Right ventricle myocardium superior (tissue), 1 donor: ENCODE measurements at regions of chr4 and their contacts with region 1.

Region 1: DNA sequence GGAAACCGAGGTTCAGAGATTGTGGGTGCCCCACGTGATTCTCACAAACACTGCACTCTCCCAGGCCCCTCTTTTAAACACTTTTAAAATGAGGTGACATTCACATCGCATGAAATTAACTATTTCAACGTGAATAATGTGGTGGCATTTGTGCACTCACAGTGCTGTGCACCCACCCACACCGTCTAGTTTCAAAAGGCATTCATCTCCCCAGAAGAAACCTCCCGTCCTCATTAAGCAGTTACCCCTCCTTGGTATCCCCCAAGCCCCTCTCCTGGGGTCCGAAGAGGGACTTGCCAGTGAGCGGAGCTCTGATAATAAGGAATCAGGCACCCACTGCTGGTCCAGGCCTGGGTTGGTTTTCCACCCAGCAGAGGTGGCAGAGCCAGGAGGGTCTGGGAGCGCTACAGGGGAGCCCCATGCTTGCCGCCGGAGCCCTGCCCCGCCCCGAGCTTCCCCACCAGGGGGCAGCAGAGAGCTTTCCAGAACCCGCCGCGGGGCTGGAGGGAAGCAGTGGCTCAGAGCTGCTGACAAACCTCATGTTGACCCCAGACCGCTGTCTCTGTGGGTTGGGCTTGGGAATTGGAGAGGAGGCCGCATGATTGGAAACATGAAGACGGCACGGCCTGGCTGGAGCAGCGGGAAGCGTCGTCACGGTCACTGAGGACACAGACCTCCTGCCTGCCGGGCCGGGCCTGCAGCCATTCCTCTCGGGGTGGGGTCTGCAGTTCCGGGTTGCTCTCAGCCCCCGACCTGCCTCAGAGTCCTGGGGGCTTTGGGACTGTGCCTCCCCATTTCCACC is 27.5 kb upstream of the HTRA3 start:
- DNase-seq: peak; percentile 93
- ATAC-seq: peak; percentile 90

Region 2: GRCh38 chr4:8176547-8177399 is 65.3 kb before region 1 on chr4:
- intact Hi-C with region 1: loop called (anchors 10 kb)
- DNase-seq: peak; percentile 69
- ATAC-seq: peak; percentile 84

Region 3: DNA sequence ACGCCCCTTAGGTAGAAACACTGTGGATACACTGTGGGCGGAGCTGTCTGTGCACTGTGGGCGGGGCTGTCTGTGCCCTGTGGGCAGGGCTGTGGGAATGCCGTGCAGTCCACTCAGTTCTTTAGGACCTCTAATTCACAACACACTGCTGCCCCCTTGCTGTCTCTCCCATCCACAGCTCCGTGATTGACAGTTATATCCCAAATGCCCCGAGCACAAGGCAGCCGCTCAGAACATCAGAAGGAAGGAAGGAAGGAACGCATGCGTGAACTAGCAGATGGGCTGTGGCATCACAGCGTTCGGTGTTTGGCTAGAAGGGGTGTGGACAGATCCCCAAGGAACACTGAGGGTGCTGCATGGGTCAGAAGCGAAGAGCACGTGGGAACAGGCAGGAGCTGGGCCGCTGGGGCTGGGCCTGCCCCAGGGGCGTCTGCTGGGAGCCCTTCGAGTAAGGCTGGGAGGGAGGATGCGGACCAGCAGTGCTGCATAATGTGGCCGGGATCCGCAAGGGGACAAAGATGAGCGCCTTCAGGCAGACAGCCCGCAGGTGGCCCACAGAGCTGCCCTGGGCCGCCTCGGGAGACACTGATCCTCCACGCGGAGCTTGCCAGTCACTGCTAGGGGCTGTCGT is 168.7 kb after region 1 on chr4:
- intact Hi-C with region 1: loop called (anchors 2 kb)
- DNase-seq: peak; percentile 83
- ATAC-seq: peak; percentile 80